Breast epithelium (tissue), 4 donors: ENCODE measurements at regions of chr5 and their contacts with region 1.

Region 1: GRCh38 chr5:91787718-91788117 is 404.6 kb upstream of the ARRDC3 start:
- DNase-seq: no peak
- H3K4me3 ChIP-seq: no peak overlapping the region
- H3K27ac ChIP-seq: no peak overlapping the region
- H3K4me1 ChIP-seq: no peaks in the 10 kb centered on the region
- H3K27me3 ChIP-seq: no peaks in the 10 kb centered on the region
- CTCF ChIP-seq: no peak
- POLR2A ChIP-seq: no peak

Region 2: GRCh38 chr5:89849830-89850512 is 1937.7 kb before region 1 on chr5:
- intact Hi-C with region 1: loop called (anchors 10 kb)
- DNase-seq: no peak
- H3K4me3 ChIP-seq: no peak overlapping the region
- H3K27ac ChIP-seq: no peak overlapping the region
- H3K4me1 ChIP-seq: no peaks in the 10 kb centered on the region
- H3K27me3 ChIP-seq: no peaks in the 10 kb centered on the region
- CTCF ChIP-seq: no peak
- POLR2A ChIP-seq: no peak